Esophagus muscularis mucosa (tissue), 4 donors: ENCODE measurements at regions of chr17 and their contacts with region 1.

Region 1: GRCh38 chr17:78781948-78782916 is at the start of gene CYTH1:
- DNase-seq: peak; percentile 99
- H3K4me3 ChIP-seq: peak within 1 kb of the TSS; percentile 92 to 100 (median 99)
- H3K27ac ChIP-seq: peak within 1 kb of the TSS; percentile 94 to 96 (median 95)
- H3K4me1 ChIP-seq: peaks cover 17 to 51% (median 35%) of the 10 kb centered on the region in 4 donors
- H3K27me3 ChIP-seq: no peaks in the 10 kb centered on the region
- CTCF ChIP-seq: no peak
- EP300 ChIP-seq: no peak
- POLR2A ChIP-seq: no peak
- total RNA-seq, gene CYTH1: 25.7 to 39.4 (median 35.7) TPM

Region 2: GRCh38 chr17:78716814-78717393 is 65.3 kb before region 1 on chr17:
- intact Hi-C with region 1: loop called (anchors 5 kb)
- DNase-seq: no peak
- H3K4me3 ChIP-seq: peak overlapping the region; percentile 51 to 62 (median 58)
- H3K27ac ChIP-seq: peak overlapping the region; percentile 52 to 71 (median 66)
- H3K4me1 ChIP-seq: peaks cover 44 to 83% (median 74%) of the 10 kb centered on the region in 4 donors
- H3K27me3 ChIP-seq: no peaks in the 10 kb centered on the region
- CTCF ChIP-seq: no peak
- EP300 ChIP-seq: no peak
- POLR2A ChIP-seq: no peak

Region 3: DNA sequence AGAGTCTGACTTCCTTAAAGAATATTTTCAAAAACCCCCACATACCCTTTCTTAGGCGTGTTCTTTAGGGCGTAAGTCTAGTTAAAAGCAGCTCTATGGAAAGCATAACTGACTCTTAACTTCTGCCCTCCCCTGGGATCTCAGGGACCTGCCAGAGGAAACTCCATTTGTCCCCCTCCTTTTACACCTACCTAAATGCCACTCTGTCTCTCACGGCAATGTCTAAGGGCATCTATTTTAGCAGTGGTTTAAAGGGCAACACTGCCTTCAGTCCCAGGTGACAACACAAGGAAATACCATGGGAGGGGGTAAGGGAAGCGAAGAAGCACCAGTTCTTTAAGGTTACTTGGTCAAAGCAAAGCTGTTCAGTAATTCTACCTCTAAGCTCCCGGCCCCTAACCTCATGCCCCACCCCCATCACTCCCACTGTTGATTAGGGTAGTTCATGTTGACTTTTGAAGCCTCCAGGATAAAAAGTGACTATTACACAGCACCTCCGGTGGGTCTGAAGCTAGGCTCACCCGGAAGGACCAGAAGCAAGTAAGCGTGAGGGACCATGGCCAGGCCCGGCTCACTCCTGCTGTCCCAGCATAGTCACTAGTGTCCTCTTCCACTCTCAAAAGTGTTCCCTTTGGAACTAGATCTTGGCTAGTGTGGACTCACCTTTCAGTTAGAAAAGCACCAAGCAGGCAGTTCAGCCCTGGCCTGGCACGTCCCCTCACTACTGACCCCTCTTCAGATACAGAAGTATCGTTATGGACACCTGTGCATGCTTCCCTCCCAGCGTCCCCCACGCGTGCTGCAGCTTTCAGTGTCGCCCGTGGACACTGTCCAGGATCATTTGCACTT is 47.2 kb before region 1 on chr17:
- intact Hi-C with region 1: no loop called
- DNase-seq: no peak
- H3K4me3 ChIP-seq: peak overlapping the region in 3 of 4 donors; percentile 42 to 61 (median 51)
- H3K27ac ChIP-seq: peak overlapping the region; percentile 13 to 75 (median 60)
- H3K4me1 ChIP-seq: peaks cover 46 to 62% (median 53%) of the 10 kb centered on the region in 4 donors
- H3K27me3 ChIP-seq: no peaks in the 10 kb centered on the region
- CTCF ChIP-seq: no peak
- EP300 ChIP-seq: no peak
- POLR2A ChIP-seq: no peak

Region 4: GRCh38 chr17:78839762-78840470 is 57.7 kb after region 1 on chr17:
- intact Hi-C with region 1: loop called (anchors 5 kb)
- DNase-seq: no peak
- H3K4me3 ChIP-seq: peak overlapping the region; percentile 72 to 98 (median 86)
- H3K27ac ChIP-seq: peak overlapping the region; percentile 98 to 100 (median 100)
- H3K4me1 ChIP-seq: peaks cover 20 to 39% (median 37%) of the 10 kb centered on the region in 4 donors
- H3K27me3 ChIP-seq: no peaks in the 10 kb centered on the region
- CTCF ChIP-seq: no peak
- EP300 ChIP-seq: no peak
- POLR2A ChIP-seq: peak; percentile 30